ENCODE measurements at regions of chrX and their contacts with region 1.

Region 1: GRCh38 chrX:51336584-51336983 is 4.0 kb downstream of the NUDT10 start:
- DNase-seq: no peak
- H3K4me3 ChIP-seq: no peak overlapping the region
- H3K27ac ChIP-seq: no peak overlapping the region
- H3K4me1 ChIP-seq: no peaks in the 10 kb centered on the region
- H3K27me3 ChIP-seq: peaks cover 0 to 4% (median 0%) of the 10 kb centered on the region in 3 donors
- CTCF ChIP-seq: peak in 3 of 4 experiments; percentile 11 to 47 (median 41)
- EP300 ChIP-seq: no peak
- POLR2A ChIP-seq: no peak

Region 2: GRCh38 chrX:51169410-51169809 is 167.2 kb before region 1 on chrX:
- intact Hi-C with region 1: no loop called
- DNase-seq: no peak
- H3K4me3 ChIP-seq: no peak overlapping the region
- H3K27ac ChIP-seq: no peak overlapping the region
- H3K4me1 ChIP-seq: no peaks in the 10 kb centered on the region
- H3K27me3 ChIP-seq: no peaks in the 10 kb centered on the region
- CTCF ChIP-seq: no peak
- EP300 ChIP-seq: no peak
- POLR2A ChIP-seq: no peak

Region 3: DNA sequence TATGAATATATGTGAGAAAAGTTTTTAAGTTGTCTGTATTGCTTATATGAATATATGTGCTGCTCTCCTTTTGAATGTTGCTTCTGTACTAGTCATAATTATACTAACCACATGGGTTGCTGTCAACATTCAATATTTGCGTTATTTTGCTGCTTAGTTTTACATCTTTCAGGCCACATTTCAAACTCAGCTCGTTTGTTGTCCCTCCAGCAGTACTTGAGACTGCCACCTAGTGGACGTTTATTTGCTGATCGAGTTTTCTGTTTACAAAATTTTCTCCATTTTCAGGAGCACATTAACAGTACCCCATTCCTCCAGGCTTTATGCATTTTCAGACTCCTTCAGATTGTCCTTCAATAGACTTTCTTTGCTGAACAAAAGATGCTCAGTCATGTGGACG is 84.0 kb after region 1 on chrX:
- intact Hi-C with region 1: loop called (anchors 2 kb)
- DNase-seq: no peak
- H3K4me3 ChIP-seq: no peak overlapping the region
- H3K27ac ChIP-seq: no peak overlapping the region
- H3K4me1 ChIP-seq: no peaks in the 10 kb centered on the region
- H3K27me3 ChIP-seq: no peaks in the 10 kb centered on the region
- CTCF ChIP-seq: peak in 3 of 4 experiments; percentile 27 to 51 (median 28)
- EP300 ChIP-seq: no peak
- POLR2A ChIP-seq: no peak

Measured in sigmoid colon (tissue), 7 donors.